ENCODE measurements at regions of chr1 and their contacts with region 1.

Region 1: GRCh38 chr1:15028102-15028501 is 125.4 kb upstream of the TMEM51 start:
- DNase-seq: no peak
- H3K4me3 Mint-ChIP-seq: no peak overlapping the region
- H3K27ac Mint-ChIP-seq: no peak overlapping the region
- H3K4me1 Mint-ChIP-seq: no peaks in the 10 kb centered on the region
- H3K27me3 Mint-ChIP-seq: no peaks in the 10 kb centered on the region
- CTCF ChIP-seq: no peak

Region 2: DNA sequence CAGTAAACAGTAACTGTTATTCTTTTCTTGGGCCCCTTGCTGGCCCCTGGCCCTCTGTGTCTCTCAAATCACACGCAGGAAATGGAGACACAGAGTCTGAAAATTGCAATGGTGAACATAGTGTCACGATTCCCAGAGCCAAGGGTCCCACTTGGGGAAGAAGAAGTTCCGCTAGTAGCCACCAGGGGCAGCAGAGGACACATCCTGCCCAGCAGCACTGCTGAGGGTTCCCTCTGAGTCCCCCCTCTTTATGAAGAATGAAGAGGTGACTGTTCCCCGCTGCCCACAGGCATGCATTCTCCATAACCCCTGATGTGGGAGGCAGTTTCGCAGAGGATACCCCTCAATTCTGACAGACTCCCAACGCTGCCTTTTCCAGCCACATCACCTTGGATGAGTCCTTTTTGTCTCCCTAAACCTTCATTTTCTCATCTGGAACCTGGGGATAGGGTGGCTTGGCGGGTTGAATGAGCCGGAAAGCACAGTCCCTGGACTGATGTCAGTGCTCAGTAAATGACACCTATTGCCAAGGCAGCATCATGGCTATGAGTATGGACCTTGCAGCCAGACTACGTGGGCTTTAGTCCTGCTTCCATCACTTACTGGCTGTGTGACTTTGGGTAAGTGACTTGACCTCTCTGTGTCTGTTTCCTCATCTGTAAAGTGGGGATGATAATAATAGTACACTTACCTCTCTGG is 112.6 kb before region 1 on chr1:
- CTCF ChIA-PET with region 1: no interaction called
- intact Hi-C with region 1: loop called (anchors 5 kb)
- DNase-seq: peak; percentile 56
- H3K4me3 Mint-ChIP-seq: no peak overlapping the region
- H3K27ac Mint-ChIP-seq: no peak overlapping the region
- H3K4me1 Mint-ChIP-seq: no peaks in the 10 kb centered on the region
- H3K27me3 Mint-ChIP-seq: peaks cover 22% of the 10 kb centered on the region
- CTCF ChIP-seq: peak; percentile 78

Measured in Calu3 (cell line).